Activated CD4-positive, alpha-beta memory T cell treated with anti-CD3 and anti-CD28 coated beads, Interleukin-2, amount 10 ng/mL, durations not matched to agents 7 days and 5 days (primary cell): ENCODE measurements at regions of chr19 and their contacts with region 1.

Region 1: GRCh38 chr19:20039203-20039723 is at the start of gene ZNF682:
- DNase-seq: peak; percentile 92
- H3K4me3 Mint-ChIP-seq: peak within 1 kb of the TSS; percentile 92
- H3K27ac Mint-ChIP-seq: peak within 1 kb of the TSS; percentile 89
- H3K4me1 Mint-ChIP-seq: peaks cover 20% of the 10 kb centered on the region
- H3K27me3 Mint-ChIP-seq: no peaks in the 10 kb centered on the region
- total RNA-seq, gene ZNF682: 4.8 to 5.5 TPM

Region 2: DNA sequence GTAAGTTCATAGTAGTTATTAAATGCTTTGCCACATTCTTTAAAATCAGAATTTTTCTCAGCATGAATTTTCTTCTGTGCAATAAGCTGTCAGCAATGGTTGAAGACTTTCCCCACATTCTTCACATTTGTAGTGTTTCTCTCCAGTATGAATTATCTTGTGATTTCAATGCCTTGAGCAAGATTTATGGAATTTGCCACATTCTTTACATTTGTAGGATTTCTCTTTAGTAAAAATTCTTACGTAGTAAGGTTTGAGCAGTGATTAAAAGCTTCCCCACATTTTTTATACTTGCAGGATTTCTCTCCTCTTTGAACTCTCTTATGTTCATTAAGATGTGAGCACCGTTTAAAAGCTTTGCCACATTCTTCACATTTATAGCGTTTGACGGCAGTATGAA is 33.5 kb before region 1 on chr19:
- CTCF ChIA-PET with region 1: no interaction called
- POLR2A ChIA-PET with region 1: no interaction called
- DNase-seq: no peak
- H3K4me3 Mint-ChIP-seq: no peak overlapping the region
- H3K27ac Mint-ChIP-seq: no peak overlapping the region
- H3K4me1 Mint-ChIP-seq: no peaks in the 10 kb centered on the region
- H3K27me3 Mint-ChIP-seq: no peaks in the 10 kb centered on the region

Region 3: DNA sequence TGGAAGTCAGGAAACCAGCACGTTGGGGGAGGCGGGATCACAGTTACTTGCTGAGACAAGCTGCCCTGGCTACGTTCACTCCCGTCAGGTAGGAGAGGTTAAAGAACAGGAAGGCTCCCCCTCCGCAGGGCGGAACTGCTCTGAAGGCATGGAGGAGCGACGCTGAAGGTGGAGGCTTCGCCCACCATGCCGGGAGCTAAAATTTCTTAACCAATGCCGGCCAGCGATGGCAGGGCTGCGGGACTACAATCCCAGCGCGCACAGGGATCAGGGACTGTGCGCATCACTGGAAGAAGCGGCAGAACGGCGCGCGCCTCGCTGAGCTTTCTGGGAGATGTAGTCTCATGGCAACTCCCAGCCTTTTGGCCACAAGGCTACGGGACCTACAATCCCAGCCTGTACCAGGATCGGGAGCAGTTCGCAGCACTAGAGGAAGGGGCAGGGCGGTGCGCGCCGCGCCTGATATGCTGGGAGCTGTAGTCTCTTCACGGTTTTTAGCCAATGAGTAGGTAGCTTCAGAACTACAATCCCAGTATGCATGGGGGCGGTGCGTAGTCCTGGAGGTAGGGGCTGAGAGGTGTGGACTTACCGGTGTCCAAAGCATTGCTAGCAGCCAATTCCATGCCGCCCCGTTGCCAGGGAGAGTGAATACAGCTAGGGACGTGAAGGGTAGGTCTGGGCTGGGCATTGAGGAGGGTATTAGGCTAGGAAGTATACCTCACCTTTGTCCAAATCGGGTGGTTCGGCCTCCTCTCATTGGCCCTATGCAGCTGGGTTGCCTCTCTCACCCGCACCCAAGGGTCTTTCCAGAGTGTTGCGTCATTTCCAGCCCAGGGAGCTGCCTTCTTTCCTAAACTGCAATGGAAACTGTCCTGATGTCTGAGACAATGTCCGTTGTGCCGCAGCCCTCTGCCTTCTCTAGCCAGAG is 12.8 kb after region 1 on chr19:
- CTCF ChIA-PET with region 1: interaction called, 3 read pairs
- POLR2A ChIA-PET with region 1: interaction called, 19 read pairs
- DNase-seq: peak; percentile 59
- H3K4me3 Mint-ChIP-seq: peak overlapping the region; percentile 86
- H3K27ac Mint-ChIP-seq: peak overlapping the region; percentile 68
- H3K4me1 Mint-ChIP-seq: peaks cover 9% of the 10 kb centered on the region
- H3K27me3 Mint-ChIP-seq: no peaks in the 10 kb centered on the region

Region 4: DNA sequence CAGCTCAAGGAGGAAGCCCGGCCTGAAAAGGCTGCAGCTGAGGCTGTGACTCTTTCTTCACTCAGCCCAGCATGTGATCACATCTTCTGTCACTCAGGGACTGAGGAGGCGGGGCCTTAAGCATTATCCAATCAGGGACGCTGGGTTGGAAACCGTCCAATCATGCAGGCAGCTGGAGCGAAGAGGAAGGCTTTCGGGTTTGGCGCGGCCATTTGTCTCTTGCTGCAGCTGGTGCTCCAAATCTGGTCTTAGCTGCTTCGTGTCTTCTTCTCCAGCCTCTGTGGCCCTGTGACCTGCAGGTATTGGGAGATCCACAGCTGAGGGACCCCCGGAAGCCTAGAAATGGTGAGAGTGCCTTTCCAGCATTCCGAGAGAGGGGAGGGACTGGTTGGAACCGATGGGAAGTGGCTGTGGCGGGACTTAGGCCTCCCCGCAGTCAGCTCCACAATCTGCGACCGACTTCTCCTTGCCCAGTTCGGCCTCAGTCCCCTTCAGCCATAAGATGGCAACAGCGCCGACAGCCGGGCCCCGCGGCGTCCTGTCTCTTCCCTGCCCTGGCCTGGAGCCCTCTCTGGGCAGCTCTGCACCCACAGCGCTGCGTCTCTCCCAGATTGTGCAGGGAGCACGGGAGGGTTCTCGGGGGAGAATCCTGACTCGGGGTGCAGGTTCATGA is 38.7 kb after region 1 on chr19 and contains the start of gene ZNF90:
- CTCF ChIA-PET with region 1: interaction called, 3 read pairs
- POLR2A ChIA-PET with region 1: interaction called, 15 read pairs
- DNase-seq: peak; percentile 87
- H3K4me3 Mint-ChIP-seq: peak within 1 kb of the TSS; percentile 87
- H3K27ac Mint-ChIP-seq: peak within 1 kb of the TSS; percentile 65
- H3K4me1 Mint-ChIP-seq: peaks cover 18% of the 10 kb centered on the region
- H3K27me3 Mint-ChIP-seq: no peaks in the 10 kb centered on the region
- total RNA-seq, gene ZNF90: 7.8 to 8.5 TPM

Region 5: GRCh38 chr19:20237761-20238623 is 198.7 kb after region 1 on chr19:
- CTCF ChIA-PET with region 1: no interaction called
- POLR2A ChIA-PET with region 1: interaction called, 11 read pairs
- DNase-seq: peak; percentile 88
- H3K4me3 Mint-ChIP-seq: peak overlapping the region; percentile 87
- H3K27ac Mint-ChIP-seq: peak overlapping the region; percentile 82
- H3K4me1 Mint-ChIP-seq: peaks cover 10% of the 10 kb centered on the region
- H3K27me3 Mint-ChIP-seq: no peaks in the 10 kb centered on the region